Ascending aorta (tissue), 2 donors: ENCODE measurements at regions of chr7 and their contacts with region 1.

Region 1: GRCh38 chr7:66211429-66211828 is 6.3 kb downstream of the TPST1 start:
- DNase-seq: no peak
- H3K4me3 ChIP-seq: no peak overlapping the region
- H3K27ac ChIP-seq: peak overlapping the region; percentile 27 to 34
- H3K4me1 ChIP-seq: peaks cover 0 to 3% of the 10 kb centered on the region in 2 donors
- H3K27me3 ChIP-seq: no peaks in the 10 kb centered on the region
- CTCF ChIP-seq: no peak

Region 2: DNA sequence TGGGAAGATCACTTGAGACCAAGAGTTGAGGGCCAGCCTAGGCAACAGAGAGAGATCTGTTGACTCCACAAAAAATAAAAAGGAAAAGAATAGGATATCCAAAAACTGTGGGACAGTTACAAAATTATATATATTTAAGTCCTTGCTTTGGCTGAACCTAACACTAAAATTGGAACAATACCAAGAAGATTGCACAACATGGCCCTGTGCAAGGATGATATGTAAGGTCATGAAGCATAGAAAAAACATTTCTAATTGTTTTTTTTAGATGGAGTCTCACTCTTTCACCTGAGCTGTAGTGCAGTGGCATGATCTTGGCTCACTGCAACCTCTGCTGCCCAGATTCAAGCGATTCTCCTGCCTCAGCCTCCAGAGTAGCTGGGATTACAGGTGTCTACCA is 132.7 kb after region 1 on chr7:
- intact Hi-C with region 1: loop called (anchors 10 kb)
- DNase-seq: no peak
- H3K4me3 ChIP-seq: no peak overlapping the region
- H3K27ac ChIP-seq: no peak overlapping the region
- H3K4me1 ChIP-seq: peaks cover under 1 to 8% of the 10 kb centered on the region in 2 donors
- H3K27me3 ChIP-seq: no peaks in the 10 kb centered on the region
- CTCF ChIP-seq: no peak

Region 3: DNA sequence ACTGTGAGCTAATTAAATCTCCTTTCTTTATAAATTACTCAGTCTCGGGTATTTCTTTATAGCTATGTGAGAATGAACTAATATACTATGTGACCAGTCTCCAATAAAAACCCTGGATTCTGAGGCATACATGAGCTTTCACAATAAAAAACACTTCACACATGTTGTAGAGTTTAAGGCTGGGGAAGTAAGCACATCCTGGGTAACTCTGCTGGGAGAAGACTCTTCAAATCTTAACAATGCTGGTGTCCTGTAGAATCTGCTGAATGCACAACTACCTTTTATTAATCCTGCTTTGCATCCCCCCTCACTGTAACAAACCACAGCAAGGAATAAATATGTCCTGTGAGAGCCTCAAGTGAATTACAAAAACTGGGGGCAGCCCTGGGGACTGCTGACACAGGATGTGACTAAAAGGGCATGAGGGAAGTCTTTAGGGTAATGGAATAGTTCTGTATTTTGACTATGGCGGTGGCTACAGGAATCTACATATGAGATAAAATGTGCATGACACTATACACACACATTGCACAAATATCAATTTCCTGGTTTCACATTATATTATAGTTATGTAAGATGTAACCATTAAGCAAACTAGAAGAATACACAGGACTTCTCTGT is 372.2 kb after region 1 on chr7:
- intact Hi-C with region 1: no loop called
- DNase-seq: no peak
- H3K4me3 ChIP-seq: no peak overlapping the region
- H3K27ac ChIP-seq: no peak overlapping the region
- H3K4me1 ChIP-seq: no peaks in the 10 kb centered on the region
- H3K27me3 ChIP-seq: no peaks in the 10 kb centered on the region
- CTCF ChIP-seq: no peak